Naive thymus-derived CD8-positive, alpha-beta T cell (primary cell): ENCODE measurements at regions of chr10 and their contacts with region 1.

Region 1: DNA sequence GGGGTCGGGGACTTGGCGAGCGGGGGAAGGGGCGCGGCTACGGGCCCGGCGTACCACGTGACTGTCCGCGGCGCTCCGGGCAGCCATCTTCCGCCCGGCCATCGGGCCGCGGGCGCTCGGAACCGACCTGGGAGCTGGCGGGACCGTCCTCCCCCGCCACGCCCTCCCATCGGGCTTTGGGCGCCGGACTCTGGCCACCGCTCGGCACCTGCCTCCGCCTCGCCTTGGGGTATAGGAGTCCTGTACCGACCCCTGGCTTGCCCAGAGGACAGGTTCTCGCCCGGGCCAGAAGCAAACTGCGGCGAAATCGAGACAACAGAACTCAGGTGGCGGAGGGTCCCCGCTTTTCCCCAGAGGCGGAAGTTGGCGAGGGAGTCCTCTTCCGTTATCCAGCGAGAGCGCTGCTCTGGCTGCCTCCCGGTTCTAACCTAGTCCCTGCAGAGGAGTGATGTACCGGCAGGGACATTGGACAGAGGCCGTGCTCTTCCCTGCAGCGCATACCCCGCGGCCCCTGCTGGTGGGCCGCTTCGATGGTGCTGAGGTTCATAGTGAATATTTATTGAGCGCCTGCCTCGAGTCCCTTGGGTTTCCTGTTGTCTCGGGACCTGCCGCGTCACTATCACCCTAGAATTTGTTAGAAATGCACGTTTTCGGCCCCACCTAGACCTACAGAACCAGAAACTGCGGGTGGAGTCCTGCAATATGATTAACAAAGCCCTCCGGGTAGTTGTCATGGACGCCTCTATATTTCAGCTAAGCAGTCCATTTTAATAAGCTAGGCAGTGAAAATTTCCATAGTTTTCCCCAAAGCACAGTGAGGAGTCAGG is 1.3 kb upstream of the SGMS1 start:
- DNase-seq: peak; percentile 47 to 79 (median 63)
- ATAC-seq: peak; percentile 43 to 51
- H3K4me3 Mint-ChIP-seq: peak overlapping the region; percentile 90 to 99 (median 95)
- H3K27ac Mint-ChIP-seq: peak overlapping the region; percentile 91 to 98 (median 96)
- H3K4me1 Mint-ChIP-seq: peaks cover 15 to 32% (median 25%) of the 10 kb centered on the region in 4 donors
- H3K27me3 Mint-ChIP-seq: no peaks in the 10 kb centered on the region

Region 2: DNA sequence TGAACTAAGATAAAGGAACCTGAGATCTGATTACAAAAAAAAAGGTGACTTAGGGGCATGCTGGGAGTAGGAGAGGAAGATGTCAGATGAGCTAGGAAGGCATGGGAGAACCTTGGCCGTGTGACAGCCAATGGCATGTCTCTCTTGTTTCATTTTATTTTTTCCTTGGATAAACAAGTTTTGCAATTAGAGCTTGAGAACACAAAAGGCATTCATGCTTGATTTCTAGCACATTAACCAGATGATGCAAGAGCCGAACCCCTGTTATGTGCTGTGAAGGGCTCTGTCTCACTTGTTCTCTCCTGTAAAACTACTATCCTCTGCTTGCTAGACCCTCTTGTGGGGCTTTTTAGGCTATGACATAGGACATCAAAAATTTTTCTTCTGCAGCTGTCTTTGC is 239.5 kb before region 1 on chr10:
- POLR2A ChIA-PET with region 1: no interaction called
- DNase-seq: no peak
- ATAC-seq: no peak
- H3K4me3 Mint-ChIP-seq: no peak overlapping the region
- H3K27ac Mint-ChIP-seq: no peak overlapping the region
- H3K4me1 Mint-ChIP-seq: peaks cover 2 to 40% (median 17%) of the 10 kb centered on the region in 4 donors
- H3K27me3 Mint-ChIP-seq: no peaks in the 10 kb centered on the region

Region 3: GRCh38 chr10:50417886-50418830 is 206.9 kb before region 1 on chr10:
- POLR2A ChIA-PET with region 1: no interaction called
- DNase-seq: peak in 6 of 10 donors; percentile 8 to 24 (median 12)
- ATAC-seq: peak; percentile 73 to 76
- H3K4me3 Mint-ChIP-seq: peak overlapping the region; percentile 74 to 90 (median 87)
- H3K27ac Mint-ChIP-seq: peak overlapping the region in 2 of 10 donors; percentile 43 to 51
- H3K4me1 Mint-ChIP-seq: peaks cover 30 to 55% (median 43%) of the 10 kb centered on the region in 4 donors
- H3K27me3 Mint-ChIP-seq: peaks cover 0 to 3% (median 0%) of the 10 kb centered on the region in 5 donors

Region 4: GRCh38 chr10:50636618-50637579 is 11.8 kb after region 1 on chr10:
- POLR2A ChIA-PET with region 1: interaction called, 10 read pairs
- DNase-seq: peak in 3 of 10 donors; percentile 23 to 46 (median 25)
- ATAC-seq: peak; percentile 67 to 69
- H3K4me3 Mint-ChIP-seq: peak overlapping the region; percentile 30 to 69 (median 56)
- H3K27ac Mint-ChIP-seq: peak overlapping the region in 7 of 10 donors; percentile 14 to 79 (median 37)
- H3K4me1 Mint-ChIP-seq: peaks cover 7 to 32% (median 31%) of the 10 kb centered on the region in 4 donors
- H3K27me3 Mint-ChIP-seq: no peaks in the 10 kb centered on the region

Region 5: GRCh38 chr10:50658165-50658564 is 33.1 kb after region 1 on chr10:
- POLR2A ChIA-PET with region 1: interaction called, 20 read pairs
- DNase-seq: no peak
- ATAC-seq: no peak
- H3K4me3 Mint-ChIP-seq: peak overlapping the region in 4 of 10 donors; percentile 16 to 40 (median 31)
- H3K27ac Mint-ChIP-seq: no peak overlapping the region
- H3K4me1 Mint-ChIP-seq: peaks cover 10 to 39% (median 27%) of the 10 kb centered on the region in 4 donors
- H3K27me3 Mint-ChIP-seq: no peaks in the 10 kb centered on the region